Right lobe of liver (tissue), 6 donors: ENCODE measurements at regions of chr17 and their contacts with region 1.

Region 1: DNA sequence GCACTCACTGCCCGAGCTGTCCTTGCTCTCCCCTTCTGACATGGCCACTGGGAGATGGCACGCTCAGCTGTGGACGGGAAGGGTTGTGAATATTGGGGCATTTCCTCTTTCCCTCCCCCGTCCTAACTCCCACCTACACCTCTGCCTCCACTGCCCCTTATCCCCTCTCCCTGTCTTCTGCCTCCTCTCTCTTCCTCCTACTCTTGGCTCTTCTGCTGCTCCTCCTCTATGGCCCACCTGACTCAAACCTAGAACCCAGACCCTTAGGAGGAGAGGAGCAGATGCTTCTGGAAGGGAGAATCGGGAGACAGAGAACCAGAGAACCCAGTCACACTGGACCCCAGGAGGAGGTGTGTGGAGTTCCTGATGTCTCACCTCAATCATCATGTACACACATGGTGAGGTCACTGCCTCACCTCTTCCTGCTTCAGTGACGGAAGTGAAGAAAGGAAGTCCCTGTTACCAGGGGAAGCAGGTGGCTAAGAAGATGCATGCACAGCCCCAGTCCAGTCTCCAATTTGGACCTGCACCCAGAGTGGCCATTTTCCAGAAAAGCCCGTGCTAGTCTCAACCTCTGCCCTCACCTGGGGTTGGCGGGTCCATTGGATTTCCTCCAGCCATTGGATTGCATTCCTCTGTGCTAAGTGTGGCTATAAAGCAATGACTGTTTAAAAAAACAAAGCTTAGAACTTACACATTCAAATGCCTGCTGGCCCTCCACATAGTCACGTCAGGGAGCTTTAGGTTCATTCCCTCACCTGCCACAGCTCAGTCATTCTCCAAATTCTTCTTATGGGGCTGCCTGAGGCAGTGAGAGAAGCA is 4.0 kb downstream of the RNF222 start:
- DNase-seq: no peak
- ATAC-seq: peak; percentile 35 to 58 (median 44)
- H3K4me3 ChIP-seq: no peak overlapping the region
- H3K27ac ChIP-seq: no peak overlapping the region
- H3K4me1 ChIP-seq: no peaks in the 10 kb centered on the region
- H3K27me3 ChIP-seq: no peaks in the 10 kb centered on the region
- CTCF ChIP-seq: no peak
- POLR2A ChIP-seq: no peak

Region 2: GRCh38 chr17:8326511-8327302 is 66.9 kb before region 1 on chr17:
- intact Hi-C with region 1: no loop called
- DNase-seq: peak in 1 of 3 donors; percentile 39
- ATAC-seq: peak; percentile 67 to 74 (median 68)
- H3K4me3 ChIP-seq: peak overlapping the region; percentile 25 to 42 (median 38)
- H3K27ac ChIP-seq: peak overlapping the region in 1 of 3 donors; percentile 29
- H3K4me1 ChIP-seq: no peaks in the 10 kb centered on the region
- H3K27me3 ChIP-seq: no peaks in the 10 kb centered on the region
- CTCF ChIP-seq: no peak
- POLR2A ChIP-seq: no peak

Region 3: GRCh38 chr17:8753976-8754440 is 360.4 kb after region 1 on chr17:
- intact Hi-C with region 1: loop called in 1 of 2 experiments (anchors 10 kb)
- DNase-seq: no peak
- ATAC-seq: peak; percentile 54 to 69 (median 64)
- H3K4me3 ChIP-seq: no peak overlapping the region
- H3K27ac ChIP-seq: no peak overlapping the region
- H3K4me1 ChIP-seq: no peaks in the 10 kb centered on the region
- H3K27me3 ChIP-seq: no peaks in the 10 kb centered on the region
- CTCF ChIP-seq: peak; percentile 42 to 58 (median 46)
- POLR2A ChIP-seq: no peak